ENCODE measurements at regions of chr2 and their contacts with region 1.

Region 1: DNA sequence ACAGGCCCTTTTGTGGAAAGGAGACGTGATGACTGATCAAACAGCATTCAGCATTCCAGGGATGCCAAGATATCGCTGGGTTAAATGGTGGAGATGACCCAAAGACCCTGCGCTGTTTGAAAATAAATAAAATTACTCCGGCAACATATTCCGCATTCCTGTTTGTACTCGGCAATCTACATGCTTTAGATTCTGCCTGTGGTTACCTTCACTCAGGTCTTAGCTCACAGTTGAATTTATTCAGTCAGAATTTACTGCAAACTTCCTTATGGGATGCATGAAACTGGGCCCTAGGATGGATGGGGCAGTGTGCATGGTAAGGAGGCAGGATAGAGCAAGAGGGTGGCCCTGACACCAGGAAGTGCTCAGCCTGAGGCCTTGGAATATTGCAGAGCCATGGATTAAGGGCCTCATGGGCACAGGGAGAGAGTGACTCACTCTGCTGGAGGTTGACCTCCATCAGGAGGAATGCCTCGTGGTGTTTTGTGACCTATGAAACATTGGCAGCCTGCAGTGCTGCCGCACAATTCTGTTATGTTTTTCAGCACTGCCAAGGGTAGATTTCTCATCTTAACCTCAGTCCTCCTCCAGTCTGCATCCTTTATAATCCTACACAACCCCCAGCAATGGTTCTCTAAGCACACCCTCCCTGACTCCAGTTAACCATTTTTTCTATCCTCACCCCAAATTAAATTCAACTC is 321.4 kb downstream of the IRS1 start:
- DNase-seq: peak; percentile 82
- ATAC-seq: peak; percentile 85
- H3K4me3 ChIP-seq: peak overlapping the region in 1 of 2 experiments; percentile 2; a peak in 1 of 4 replicates
- H3K27ac ChIP-seq: peak overlapping the region; percentile 90
- H3K4me1 ChIP-seq: peaks cover 51 to 88% of the 10 kb centered on the region in 2 experiments
- H3K27me3 ChIP-seq: no peaks in the 10 kb centered on the region
- CTCF ChIP-seq: no peak
- POLR2A ChIP-seq: no peak
- RAD21 ChIP-seq: peak; percentile 21; the same call in 1 of the 2 replicates

Region 2: DNA sequence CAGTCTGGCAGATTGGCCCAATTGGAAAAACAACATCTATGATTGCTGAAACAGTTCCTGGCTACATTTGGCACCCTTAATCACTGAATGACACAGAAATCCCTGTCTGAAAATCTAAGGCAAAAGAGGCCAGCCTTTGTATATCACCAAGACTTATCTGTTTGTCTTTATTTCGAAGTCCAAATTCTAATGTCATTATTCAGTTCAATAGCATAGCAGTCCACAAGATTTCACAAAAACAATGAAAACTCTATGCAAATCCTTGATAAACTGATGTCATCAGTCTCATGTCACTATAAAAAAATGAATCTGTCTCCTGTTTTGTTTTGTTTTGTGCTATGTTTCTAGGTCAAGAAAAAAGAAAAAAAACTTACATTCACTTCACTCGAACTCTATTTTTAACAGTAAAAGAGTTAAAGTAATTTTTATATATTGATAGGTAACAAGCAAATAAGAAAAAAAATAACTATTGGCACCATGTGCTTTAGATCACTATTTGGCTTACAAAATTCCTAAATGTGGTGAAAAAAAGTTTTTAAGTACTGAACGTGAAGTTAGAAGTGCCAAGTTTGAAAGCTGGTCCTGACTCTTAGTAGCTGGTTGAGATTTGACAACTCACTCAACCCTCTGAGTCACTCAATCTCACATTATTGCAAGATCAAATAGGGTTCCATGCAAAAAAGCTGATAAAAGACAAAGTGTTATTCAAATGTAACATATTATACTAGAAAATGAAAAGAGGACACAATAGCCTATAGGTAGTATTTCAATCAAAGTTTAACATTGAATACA is 37.9 kb before region 1 on chr2:
- CTCF ChIA-PET with region 1: no interaction called
- POLR2A ChIA-PET with region 1: no interaction called
- RAD21 ChIA-PET with region 1: no interaction called
- intact Hi-C with region 1: loop called (anchors 1 kb)
- DNase-seq: no peak
- ATAC-seq: no peak
- H3K4me3 ChIP-seq: no peak overlapping the region
- H3K27ac ChIP-seq: no peak overlapping the region
- H3K4me1 ChIP-seq: 0 out of 4 replicates have a peak, but pooled peaks cover 0 to 3% of the 10 kb centered on the region in 2 experiments
- H3K27me3 ChIP-seq: no peaks in the 10 kb centered on the region
- CTCF ChIP-seq: no peak
- POLR2A ChIP-seq: no peak
- RAD21 ChIP-seq: no peak